GM10248 (cell line): ENCODE measurements at regions of chr6 and their contacts with region 1.

Region 1: GRCh38 chr6:148177589-148178233 is 164.9 kb upstream of the SASH1 start:
- DNase-seq: peak; percentile 22
- CTCF ChIP-seq: peak; percentile 67

Region 2: GRCh38 chr6:147970975-147971374 is 206.7 kb before region 1 on chr6:
- CTCF ChIA-PET with region 1: no interaction called
- POLR2A ChIA-PET with region 1: no interaction called
- DNase-seq: no peak
- CTCF ChIP-seq: no peak

Region 3: DNA sequence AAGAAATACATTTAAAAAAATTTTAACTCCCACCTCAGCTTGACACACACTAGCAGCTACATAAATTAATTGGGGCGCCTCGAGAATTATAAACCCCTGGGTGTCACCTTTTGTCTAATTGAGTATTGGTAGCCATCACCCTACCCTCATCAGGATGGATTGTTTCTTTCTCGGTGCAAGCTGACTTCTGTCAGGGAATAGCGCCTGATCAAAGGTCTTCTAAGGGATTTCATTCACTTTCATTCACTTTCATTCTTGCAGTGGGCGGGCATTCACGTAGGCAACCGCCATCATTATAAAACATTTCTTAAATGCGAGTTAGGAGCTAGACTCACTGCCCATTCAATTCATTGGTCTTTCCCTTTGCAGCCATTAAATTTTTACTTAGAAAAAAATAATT is 74.3 kb before region 1 on chr6:
- CTCF ChIA-PET with region 1: no interaction called
- POLR2A ChIA-PET with region 1: no interaction called
- DNase-seq: no peak
- CTCF ChIP-seq: no peak

Region 4: GRCh38 chr6:148118244-148118643 is 59.5 kb before region 1 on chr6:
- CTCF ChIA-PET with region 1: no interaction called
- POLR2A ChIA-PET with region 1: no interaction called
- DNase-seq: no peak
- CTCF ChIP-seq: no peak

Region 5: DNA sequence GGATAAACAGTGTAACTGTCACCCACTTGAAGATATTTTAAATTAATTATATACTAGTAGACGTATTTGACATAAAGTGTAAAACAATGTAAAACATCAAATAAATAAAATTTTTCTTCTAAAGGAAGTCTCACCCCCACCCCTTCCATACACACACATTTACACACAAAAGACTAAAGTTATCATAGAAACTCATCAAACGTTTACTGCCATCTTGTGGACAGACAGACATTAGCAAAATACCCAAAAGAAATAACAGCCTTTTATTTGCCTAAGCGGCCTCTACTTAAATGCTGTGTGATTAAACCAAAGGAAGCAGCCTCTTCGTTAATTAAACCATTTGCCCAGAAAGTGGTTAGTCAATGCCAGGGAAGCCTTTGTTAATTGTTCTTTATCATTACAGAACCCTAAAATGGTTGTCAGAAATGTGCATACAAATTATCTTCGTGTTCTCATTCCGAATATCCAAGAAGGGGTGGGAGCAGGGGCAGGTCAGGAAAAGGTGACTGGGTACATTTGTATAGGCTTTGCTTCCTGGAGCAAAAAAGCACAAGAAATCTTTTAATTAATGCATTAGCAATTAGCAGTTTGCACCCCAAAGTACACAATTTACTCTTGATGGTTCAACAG is 11.3 kb before region 1 on chr6:
- CTCF ChIA-PET with region 1: interaction called, 12 read pairs
- POLR2A ChIA-PET with region 1: no interaction called
- DNase-seq: peak; percentile 19
- CTCF ChIP-seq: peak; percentile 68

Region 6: GRCh38 chr6:148250975-148251685 is 73.4 kb after region 1 on chr6:
- CTCF ChIA-PET with region 1: interaction called, 12 read pairs
- POLR2A ChIA-PET with region 1: no interaction called
- DNase-seq: peak; percentile 16
- CTCF ChIP-seq: peak; percentile 38

Region 7: DNA sequence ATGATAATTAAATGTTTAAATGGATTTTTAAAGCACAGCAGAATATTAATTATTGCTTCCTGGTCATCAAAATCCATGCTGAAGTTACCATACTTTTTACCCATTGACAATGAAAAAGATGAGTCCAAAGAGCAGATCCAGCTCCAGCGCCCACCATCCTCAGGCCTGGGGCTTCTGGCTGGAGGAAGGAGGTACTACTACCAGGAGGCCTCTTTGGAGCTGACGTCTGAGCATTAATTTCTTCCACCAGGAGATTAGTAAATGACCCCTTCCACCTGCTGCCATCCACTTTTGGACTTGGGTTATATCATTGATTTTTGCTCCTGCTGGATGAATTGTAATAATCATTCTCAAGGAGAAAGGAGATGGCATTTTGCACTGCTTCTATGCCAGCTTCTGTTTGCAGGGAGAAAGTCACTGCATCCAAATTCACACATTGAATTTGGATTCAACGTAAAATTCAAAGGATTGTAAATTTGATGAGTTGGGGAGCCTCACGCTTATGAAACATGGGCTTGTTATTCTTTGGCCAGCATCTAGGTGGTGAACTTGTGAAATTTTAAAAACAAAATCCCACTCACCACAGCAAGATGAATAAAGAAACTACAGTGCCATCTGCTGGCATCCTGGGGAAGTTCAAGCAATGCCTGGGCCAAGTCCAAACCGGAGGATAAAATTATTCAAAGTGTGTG is 286.8 kb after region 1 on chr6:
- CTCF ChIA-PET with region 1: interaction called, 26 read pairs
- POLR2A ChIA-PET with region 1: no interaction called
- DNase-seq: peak; percentile 64
- CTCF ChIP-seq: peak; percentile 88

Region 8: DNA sequence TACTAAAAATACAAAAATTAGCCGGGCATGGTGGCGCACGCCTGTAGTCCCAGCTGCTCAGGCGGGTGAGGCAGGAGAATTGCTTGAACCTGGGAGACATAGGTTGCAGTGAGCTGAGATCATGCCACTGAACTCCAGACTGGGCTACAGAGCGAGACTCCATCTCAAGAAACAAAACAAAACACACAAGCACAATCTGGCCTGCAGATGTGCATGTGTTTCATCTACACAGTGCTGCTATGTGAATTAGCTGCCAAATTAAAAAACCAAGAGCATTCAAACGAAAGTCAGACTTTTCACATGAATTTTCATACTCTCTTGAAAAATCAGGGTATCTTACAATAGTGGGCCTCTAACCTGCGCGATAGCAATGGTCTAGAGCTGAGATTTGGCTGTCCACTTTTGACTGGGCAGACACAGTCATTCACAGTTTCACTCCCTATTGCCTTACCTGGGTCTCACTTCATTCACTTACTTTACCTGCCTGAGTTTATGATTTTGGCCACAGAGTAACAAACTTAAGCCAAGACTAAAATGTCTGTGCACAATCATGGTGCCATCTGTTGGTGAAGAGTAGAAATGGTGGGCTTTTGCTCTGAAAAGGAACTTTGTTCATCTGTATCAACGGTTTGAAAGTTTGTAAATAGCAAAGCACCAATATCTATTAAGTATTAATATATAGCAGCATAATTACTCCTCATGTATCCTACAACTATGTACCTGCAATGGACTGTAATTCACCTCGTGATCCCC is 430.7 kb after region 1 on chr6:
- CTCF ChIA-PET with region 1: no interaction called
- POLR2A ChIA-PET with region 1: no interaction called
- DNase-seq: no peak
- CTCF ChIP-seq: peak; percentile 16